Cardiac septum (tissue), 1 donor: ENCODE measurements at regions of chr5 and their contacts with region 1.

Region 1: DNA sequence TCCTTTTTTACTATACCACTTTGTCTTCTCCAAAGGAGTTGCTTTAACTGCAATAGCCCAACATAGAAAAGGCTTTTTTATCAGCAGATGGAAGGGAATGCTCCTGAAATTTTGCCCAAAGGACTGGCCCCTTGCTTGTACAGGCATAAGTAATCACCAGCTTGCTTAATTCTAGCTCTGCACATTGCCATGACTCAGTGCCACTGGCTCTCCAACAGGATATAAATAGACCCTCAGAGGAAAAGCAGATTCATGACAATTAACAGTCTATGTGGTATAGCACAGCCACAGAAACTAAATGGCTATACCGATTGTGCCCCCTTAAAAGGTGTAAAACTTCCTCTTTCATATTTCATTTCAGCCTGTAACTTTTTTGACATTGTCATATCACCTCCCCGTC is 227.0 kb downstream of the ZNF608 start:
- DNase-seq: no peak

Region 2: DNA sequence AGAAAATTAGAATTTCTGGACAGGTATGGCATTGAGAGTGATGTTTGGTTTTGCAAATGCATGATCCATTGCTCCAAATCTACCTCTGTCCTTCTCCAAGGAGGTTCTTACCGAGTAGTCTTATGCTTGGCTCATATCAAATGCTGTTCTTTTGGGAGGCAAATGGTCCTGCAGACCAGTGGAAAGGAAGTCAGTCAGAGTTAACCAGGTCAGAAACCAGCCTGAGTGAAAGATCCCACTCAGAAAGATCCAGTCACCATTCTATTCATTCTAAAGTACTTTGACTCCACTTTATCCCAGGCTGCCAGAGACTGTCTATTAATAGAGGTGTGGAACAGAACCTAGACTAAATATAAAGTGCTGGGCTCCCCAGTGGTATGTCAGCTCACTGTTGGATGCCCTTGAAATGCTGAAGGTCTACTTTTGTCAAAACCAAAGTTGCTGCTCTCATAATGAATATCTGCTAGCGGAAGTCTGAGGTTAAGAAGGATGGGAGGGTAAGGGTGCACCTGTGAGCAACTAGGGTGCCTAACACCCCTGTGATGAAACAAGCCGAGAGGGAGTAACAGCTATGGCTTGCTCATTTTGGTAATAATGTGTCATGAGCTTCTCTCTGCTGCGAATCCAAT is 75.1 kb before region 1 on chr5:
- intact Hi-C with region 1: loop called (anchors 5 kb)
- DNase-seq: no peak

Region 3: DNA sequence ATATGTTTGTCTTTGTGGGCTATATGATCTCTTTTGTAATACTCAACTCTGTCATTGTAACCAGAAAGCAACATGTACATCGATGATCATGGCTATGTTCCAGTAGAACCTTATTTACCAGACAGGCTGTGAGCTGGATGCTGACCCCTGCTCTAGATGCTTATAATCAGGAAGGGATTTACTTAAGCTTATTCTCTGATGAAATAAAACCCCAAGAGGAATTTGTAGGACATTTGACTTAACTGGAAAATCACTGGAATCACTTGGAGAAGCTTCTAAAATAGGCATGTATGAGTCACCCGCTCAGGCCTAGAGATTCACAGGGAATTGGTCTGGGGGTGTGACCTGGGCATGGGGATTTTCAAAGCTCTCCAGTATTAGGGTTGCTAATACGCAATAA is 512.9 kb after region 1 on chr5:
- intact Hi-C with region 1: no loop called
- DNase-seq: no peak